Heart right ventricle (tissue), 16 donors: ENCODE measurements at regions of chr16 and their contacts with region 1.

Region 1: GRCh38 chr16:66135421-66135831 is 231.1 kb upstream of the CDH5 start:
- DNase-seq: peak; percentile 52 to 66
- ATAC-seq: peak; percentile 84 to 96 (median 91)
- H3K4me3 ChIP-seq: no peak overlapping the region
- H3K27ac ChIP-seq: peak overlapping the region in 6 of 10 donors; percentile 22 to 64 (median 52)
- H3K4me1 ChIP-seq: peaks cover 9 to 17% (median 12%) of the 10 kb centered on the region in 9 donors
- H3K27me3 ChIP-seq: no peaks in the 10 kb centered on the region
- CTCF ChIP-seq: no peak

Region 2: GRCh38 chr16:66014221-66014620 is 121.2 kb before region 1 on chr16:
- intact Hi-C with region 1: loop called in 1 of 10 experiments (anchors 10 kb)
- DNase-seq: no peak
- ATAC-seq: no peak
- H3K4me3 ChIP-seq: no peak overlapping the region
- H3K27ac ChIP-seq: no peak overlapping the region
- H3K4me1 ChIP-seq: no peaks in the 10 kb centered on the region
- H3K27me3 ChIP-seq: no peaks in the 10 kb centered on the region
- CTCF ChIP-seq: no peak

Region 3: GRCh38 chr16:66058172-66058691 is 77.2 kb before region 1 on chr16:
- intact Hi-C with region 1: no loop called
- DNase-seq: no peak
- ATAC-seq: no peak
- H3K4me3 ChIP-seq: no peak overlapping the region
- H3K27ac ChIP-seq: no peak overlapping the region
- H3K4me1 ChIP-seq: no peaks in the 10 kb centered on the region
- H3K27me3 ChIP-seq: peaks cover 0 to 7% (median 0%) of the 10 kb centered on the region in 7 donors
- CTCF ChIP-seq: no peak

Region 4: DNA sequence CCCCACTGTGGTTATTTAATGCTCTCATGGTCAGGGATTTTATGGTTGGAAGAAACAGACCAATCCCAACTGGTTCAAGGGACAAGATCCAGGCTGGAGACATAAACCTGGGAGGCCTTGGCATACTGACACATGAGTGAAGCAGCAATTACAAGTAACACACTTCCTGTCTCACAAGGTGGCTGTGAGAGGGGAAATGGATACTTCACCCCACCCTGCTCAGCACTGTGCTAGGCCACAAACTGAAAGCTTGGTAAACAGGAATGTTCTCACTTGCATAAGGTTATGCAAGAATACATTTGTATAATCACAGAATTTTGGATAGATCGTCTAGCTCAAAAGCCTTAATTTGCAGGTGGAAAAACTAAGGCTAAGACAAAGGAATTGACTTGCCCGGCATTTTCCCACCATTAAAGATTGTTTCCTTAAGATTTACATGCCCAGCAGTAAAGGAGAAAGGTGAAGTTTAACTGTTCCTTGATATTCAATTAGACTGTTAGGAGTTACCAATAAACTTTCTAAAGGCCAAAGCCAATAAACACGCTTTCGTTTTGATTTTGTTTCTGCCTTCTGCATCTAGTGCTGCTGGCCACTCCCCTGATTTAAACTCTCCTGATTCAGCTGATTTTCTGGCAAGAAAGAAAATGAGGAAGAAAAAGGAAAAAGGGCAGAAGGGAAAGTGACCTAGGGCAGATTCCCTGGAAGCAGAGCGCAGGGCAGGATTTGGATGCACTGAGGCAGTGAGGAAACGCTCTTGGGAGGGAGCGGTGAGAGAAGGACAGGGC is 15.5 kb after region 1 on chr16:
- intact Hi-C with region 1: no loop called
- DNase-seq: no peak
- ATAC-seq: peak in 5 of 8 donors; percentile 27 to 70 (median 41)
- H3K4me3 ChIP-seq: no peak overlapping the region
- H3K27ac ChIP-seq: peak overlapping the region in 3 of 10 donors; percentile 33 to 50 (median 49)
- H3K4me1 ChIP-seq: peaks cover 0 to 19% (median 10%) of the 10 kb centered on the region in 9 donors
- H3K27me3 ChIP-seq: no peaks in the 10 kb centered on the region
- CTCF ChIP-seq: no peak

Region 5: DNA sequence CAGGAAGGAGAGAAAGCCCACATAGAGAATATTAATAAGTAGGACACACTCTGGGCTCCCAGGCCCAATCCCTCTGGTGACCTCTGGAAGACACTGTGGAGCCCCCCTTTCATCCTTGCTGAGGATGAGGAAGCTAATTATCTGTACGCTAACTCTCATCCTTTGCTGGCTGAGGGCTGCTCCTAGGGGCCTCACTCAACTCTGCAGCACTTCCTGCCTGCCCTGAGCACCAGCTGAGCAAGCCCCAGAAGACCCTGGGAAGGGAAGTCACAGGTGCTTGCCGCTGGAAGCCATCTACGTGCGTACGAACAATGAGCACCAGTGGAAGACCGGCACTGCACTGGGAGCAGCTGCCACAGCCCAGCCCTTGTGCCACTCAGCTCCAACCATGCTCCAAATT is 85.3 kb after region 1 on chr16:
- intact Hi-C with region 1: loop called in 1 of 10 experiments (anchors 1 kb)
- DNase-seq: no peak
- ATAC-seq: no peak
- H3K4me3 ChIP-seq: no peak overlapping the region
- H3K27ac ChIP-seq: no peak overlapping the region
- H3K4me1 ChIP-seq: peaks cover 0 to 8% (median 0%) of the 10 kb centered on the region in 9 donors
- H3K27me3 ChIP-seq: no peaks in the 10 kb centered on the region
- CTCF ChIP-seq: no peak